ENCODE measurements at regions of chr10 and their contacts with region 1.

Region 1: DNA sequence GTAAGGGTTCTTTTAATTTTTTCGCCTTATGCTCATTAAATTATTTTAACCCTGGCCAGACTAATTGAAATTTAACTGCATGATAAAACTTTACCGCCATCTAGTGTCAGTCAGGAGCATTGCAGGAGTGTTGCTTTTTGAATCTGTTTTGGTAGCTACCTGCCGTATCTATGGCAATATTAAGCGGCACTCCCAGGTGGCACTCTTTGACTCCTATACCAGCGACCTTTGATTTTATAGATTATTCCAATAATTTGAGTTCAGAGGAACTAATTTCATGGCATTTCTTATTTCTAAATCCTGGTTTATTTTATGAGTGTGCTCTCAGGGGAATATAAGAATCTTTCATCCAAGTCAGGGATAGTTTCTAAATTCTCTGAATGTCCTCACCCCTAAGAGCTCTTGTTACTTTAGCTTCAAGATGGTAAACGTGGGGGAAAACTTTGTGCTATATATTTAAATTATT is 198.9 kb downstream of the REEP3 start:
- DNase-seq: peak; percentile 66
- ATAC-seq: peak; percentile 86
- H3K4me3 Mint-ChIP-seq: no peak overlapping the region
- H3K27ac Mint-ChIP-seq: no peak overlapping the region
- H3K4me1 Mint-ChIP-seq: peaks cover 13% of the 10 kb centered on the region
- H3K27me3 Mint-ChIP-seq: peaks cover 7% of the 10 kb centered on the region
- CTCF ChIP-seq: peak; percentile 99

Region 2: GRCh38 chr10:63166742-63167258 is 553.3 kb before region 1 on chr10:
- CTCF ChIA-PET with region 1: interaction called, 215 read pairs
- POLR2A ChIA-PET with region 1: no interaction called
- intact Hi-C with region 1: loop called (anchors 5 kb)
- DNase-seq: peak; percentile 19
- ATAC-seq: peak; percentile 84
- H3K4me3 Mint-ChIP-seq: no peak overlapping the region
- H3K27ac Mint-ChIP-seq: no peak overlapping the region
- H3K4me1 Mint-ChIP-seq: peaks cover 35% of the 10 kb centered on the region
- H3K27me3 Mint-ChIP-seq: no peaks in the 10 kb centered on the region
- CTCF ChIP-seq: peak; percentile 79

Region 3: GRCh38 chr10:63217120-63217605 is 502.9 kb before region 1 on chr10:
- CTCF ChIA-PET with region 1: interaction called, 23 read pairs
- POLR2A ChIA-PET with region 1: no interaction called
- intact Hi-C with region 1: loop called (anchors 5 kb)
- DNase-seq: peak; percentile 21
- ATAC-seq: peak; percentile 88
- H3K4me3 Mint-ChIP-seq: no peak overlapping the region
- H3K27ac Mint-ChIP-seq: peak overlapping the region; percentile 32
- H3K4me1 Mint-ChIP-seq: peaks cover 60% of the 10 kb centered on the region
- H3K27me3 Mint-ChIP-seq: no peaks in the 10 kb centered on the region
- CTCF ChIP-seq: peak; percentile 78

Region 4: GRCh38 chr10:63331586-63331985 is 388.5 kb before region 1 on chr10:
- CTCF ChIA-PET with region 1: no interaction called
- POLR2A ChIA-PET with region 1: no interaction called
- intact Hi-C with region 1: no loop called
- DNase-seq: no peak
- ATAC-seq: no peak
- H3K4me3 Mint-ChIP-seq: no peak overlapping the region
- H3K27ac Mint-ChIP-seq: no peak overlapping the region
- H3K4me1 Mint-ChIP-seq: peaks cover 6% of the 10 kb centered on the region
- H3K27me3 Mint-ChIP-seq: no peaks in the 10 kb centered on the region
- CTCF ChIP-seq: no peak

Region 5: DNA sequence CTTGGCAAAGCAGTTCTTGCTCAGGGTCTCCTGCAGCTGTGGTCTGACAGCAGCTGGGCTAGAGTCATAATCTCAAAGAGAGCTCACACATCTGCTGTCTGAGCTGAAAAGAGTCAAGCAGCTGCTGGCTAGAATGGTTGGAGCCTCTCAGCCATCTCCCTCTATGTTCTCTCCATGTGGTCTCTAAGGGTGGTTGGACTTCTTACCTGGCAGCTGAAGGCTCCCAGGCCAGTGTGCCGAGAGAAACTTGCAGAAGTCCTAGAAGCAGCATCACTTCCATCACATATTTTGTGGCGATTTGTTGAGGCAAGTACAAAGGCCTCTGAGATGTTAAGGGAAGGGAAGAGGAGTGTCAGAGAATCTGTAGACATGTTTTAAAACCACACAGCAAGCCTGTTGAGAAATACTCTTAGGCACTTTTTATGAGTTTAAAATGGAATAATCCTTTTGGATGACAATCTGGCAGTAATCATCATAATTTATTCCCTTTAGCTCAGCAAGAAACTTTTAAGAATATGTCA is 105.7 kb before region 1 on chr10:
- CTCF ChIA-PET with region 1: interaction called, 11 read pairs
- POLR2A ChIA-PET with region 1: interaction called, 3 read pairs
- intact Hi-C with region 1: no loop called
- DNase-seq: no peak
- ATAC-seq: no peak
- H3K4me3 Mint-ChIP-seq: no peak overlapping the region
- H3K27ac Mint-ChIP-seq: no peak overlapping the region
- H3K4me1 Mint-ChIP-seq: peaks cover 5% of the 10 kb centered on the region
- H3K27me3 Mint-ChIP-seq: no peaks in the 10 kb centered on the region
- CTCF ChIP-seq: no peak

Region 6: DNA sequence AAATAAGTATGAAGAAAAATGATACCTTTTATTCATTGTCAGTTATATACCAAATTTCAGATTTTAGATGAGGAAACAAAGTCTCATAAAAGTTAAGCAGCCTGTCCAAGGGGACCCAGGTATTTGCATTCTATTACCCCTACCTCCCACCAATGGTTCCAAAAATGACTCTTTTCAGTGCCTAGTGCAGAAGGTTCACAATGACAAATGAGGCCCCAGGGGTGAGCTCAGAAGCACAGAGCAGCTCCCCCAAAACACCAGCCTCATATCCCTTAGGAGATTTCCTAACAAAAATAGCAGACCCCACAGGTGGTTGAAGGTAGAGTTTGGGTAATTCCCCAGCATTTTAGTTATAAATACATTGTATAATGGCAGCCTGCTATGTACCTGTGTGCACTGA is 30.3 kb before region 1 on chr10:
- CTCF ChIA-PET with region 1: interaction called, 12 read pairs
- POLR2A ChIA-PET with region 1: no interaction called
- intact Hi-C with region 1: no loop called
- DNase-seq: no peak
- ATAC-seq: no peak
- H3K4me3 Mint-ChIP-seq: no peak overlapping the region
- H3K27ac Mint-ChIP-seq: no peak overlapping the region
- H3K4me1 Mint-ChIP-seq: no peaks in the 10 kb centered on the region
- H3K27me3 Mint-ChIP-seq: peaks cover 6% of the 10 kb centered on the region
- CTCF ChIP-seq: no peak

Region 7: DNA sequence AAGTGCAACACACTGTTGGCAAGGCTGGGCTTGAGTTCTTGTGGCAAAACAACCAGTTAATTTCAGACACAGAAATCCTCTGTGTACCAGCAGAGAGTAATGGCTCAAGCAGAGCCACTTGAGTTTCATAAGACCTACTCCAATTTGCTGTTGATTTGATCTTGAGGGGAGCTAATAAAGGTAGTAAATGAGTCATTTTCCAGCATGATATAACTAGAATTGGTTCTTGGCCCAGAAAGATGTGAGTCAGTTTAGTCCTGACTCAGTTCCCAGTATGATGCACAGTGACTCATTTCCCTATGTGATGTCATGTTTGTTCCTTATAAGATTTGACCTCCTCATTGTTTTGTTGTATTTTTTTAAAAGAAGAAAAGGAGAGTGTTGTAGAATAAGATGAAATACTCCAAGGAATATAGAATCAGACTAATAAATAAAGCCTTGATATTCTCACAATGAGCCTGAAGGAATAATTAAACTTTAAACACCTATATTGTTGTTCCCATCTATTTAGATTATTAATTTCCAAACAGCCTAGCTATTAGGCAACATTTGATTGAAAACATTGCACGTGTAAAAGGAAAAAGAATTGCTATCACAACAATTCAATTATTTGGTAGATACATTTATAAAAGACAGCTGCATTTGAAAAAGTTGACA is 12.7 kb before region 1 on chr10:
- CTCF ChIA-PET with region 1: interaction called, 32 read pairs
- POLR2A ChIA-PET with region 1: interaction called, 5 read pairs
- intact Hi-C with region 1: no loop called
- DNase-seq: peak; percentile 51
- ATAC-seq: peak; percentile 94
- H3K4me3 Mint-ChIP-seq: no peak overlapping the region
- H3K27ac Mint-ChIP-seq: peak overlapping the region; percentile 48
- H3K4me1 Mint-ChIP-seq: peaks cover 37% of the 10 kb centered on the region
- H3K27me3 Mint-ChIP-seq: no peaks in the 10 kb centered on the region
- CTCF ChIP-seq: no peak

Region 8: DNA sequence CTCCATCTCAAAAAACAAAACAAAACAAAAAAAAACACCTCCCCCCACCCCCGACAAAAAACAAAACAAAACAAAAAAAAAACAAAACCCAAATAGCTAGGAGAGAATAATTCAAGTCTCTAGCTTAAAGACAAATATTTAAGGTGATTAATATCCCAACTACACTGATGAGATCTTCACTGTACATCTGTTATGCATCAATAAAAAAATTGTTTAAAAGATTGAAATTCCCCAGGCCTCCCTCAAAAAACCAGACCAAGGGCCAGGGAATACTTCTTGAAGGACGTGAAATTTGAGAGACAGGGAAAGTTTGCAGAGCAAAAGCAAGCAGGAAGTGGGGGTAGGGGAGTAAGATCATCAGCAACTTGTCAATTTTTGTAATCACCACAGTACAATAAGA is 33.7 kb after region 1 on chr10:
- CTCF ChIA-PET with region 1: interaction called, 10 read pairs
- POLR2A ChIA-PET with region 1: no interaction called
- intact Hi-C with region 1: no loop called
- DNase-seq: no peak
- ATAC-seq: no peak
- H3K4me3 Mint-ChIP-seq: no peak overlapping the region
- H3K27ac Mint-ChIP-seq: no peak overlapping the region
- H3K4me1 Mint-ChIP-seq: no peaks in the 10 kb centered on the region
- H3K27me3 Mint-ChIP-seq: peaks cover 11% of the 10 kb centered on the region
- CTCF ChIP-seq: no peak

Region 9: GRCh38 chr10:64041185-64041988 is 321.3 kb after region 1 on chr10:
- CTCF ChIA-PET with region 1: no interaction called
- POLR2A ChIA-PET with region 1: no interaction called
- intact Hi-C with region 1: no loop called
- DNase-seq: peak; percentile 86
- ATAC-seq: peak; percentile 98
- H3K4me3 Mint-ChIP-seq: peak overlapping the region; percentile 52
- H3K27ac Mint-ChIP-seq: no peak overlapping the region
- H3K4me1 Mint-ChIP-seq: peaks cover 4% of the 10 kb centered on the region
- H3K27me3 Mint-ChIP-seq: peaks cover 4% of the 10 kb centered on the region
- CTCF ChIP-seq: peak; percentile 98

Measured in activated CD8-positive, alpha-beta T cell treated with anti-CD3 and anti-CD28 coated beads for 36 hours (primary cell).